Lower lobe of right lung (tissue), 2 donors: ENCODE measurements at regions of chr9 and their contacts with region 1.

Region 1: GRCh38 chr9:130701056-130702022 is 7.8 kb downstream of the EXOSC2 start:
- DNase-seq: peak; percentile 76
- ATAC-seq: peak; percentile 91 to 93
- H3K4me3 ChIP-seq: no peak overlapping the region
- H3K27ac ChIP-seq: no peak overlapping the region
- H3K4me1 ChIP-seq: no peaks in the 10 kb centered on the region
- H3K27me3 ChIP-seq: no peaks in the 10 kb centered on the region
- CTCF ChIP-seq: peak; percentile 94

Region 2: DNA sequence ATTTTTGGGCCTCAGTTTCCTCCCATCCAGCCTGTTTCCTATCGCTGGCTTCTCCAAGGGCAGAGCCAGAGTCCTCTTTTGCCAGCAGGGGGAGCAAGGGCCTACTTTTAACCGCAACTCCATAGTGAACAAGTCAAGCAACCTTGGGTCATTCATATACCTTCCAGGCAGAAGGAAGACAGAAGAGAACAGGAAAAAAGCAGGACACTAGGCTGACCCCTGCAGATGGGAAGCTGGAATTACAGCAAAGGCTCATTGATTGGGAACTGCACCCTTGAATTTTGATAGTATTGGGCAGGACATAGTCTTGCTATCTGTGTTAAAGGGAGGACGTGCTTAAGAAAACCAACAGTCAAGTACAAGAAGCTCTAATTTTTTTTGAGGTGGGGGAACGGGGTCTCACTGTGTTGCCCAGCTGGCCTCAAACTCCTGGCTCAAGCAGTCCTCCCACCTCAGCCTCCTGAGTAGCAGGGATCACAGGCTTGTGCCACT is 165.2 kb after region 1 on chr9:
- intact Hi-C with region 1: loop called (anchors 10 kb)
- DNase-seq: no peak
- ATAC-seq: peak; percentile 83 to 87
- H3K4me3 ChIP-seq: no peak overlapping the region
- H3K27ac ChIP-seq: no peak overlapping the region
- H3K4me1 ChIP-seq: peaks cover under 1% of the 10 kb centered on the region
- H3K27me3 ChIP-seq: no peaks in the 10 kb centered on the region
- CTCF ChIP-seq: peak; percentile 72